ENCODE measurements at regions of chr21 and their contacts with region 1.

Region 1: GRCh38 chr21:37463083-37463801 is 96.7 kb downstream of the DYRK1A start:
- DNase-seq: no peak
- ATAC-seq: peak; percentile 58
- H3K4me3 Mint-ChIP-seq: no peak overlapping the region
- H3K27ac Mint-ChIP-seq: peak overlapping the region; percentile 31
- H3K4me1 Mint-ChIP-seq: peaks cover 47% of the 10 kb centered on the region
- H3K27me3 Mint-ChIP-seq: no peaks in the 10 kb centered on the region

Region 2: GRCh38 chr21:37446552-37446951 is 16.7 kb before region 1 on chr21:
- CTCF ChIA-PET with region 1: interaction called, 10 read pairs
- POLR2A ChIA-PET with region 1: no interaction called
- DNase-seq: no peak
- ATAC-seq: peak; percentile 32
- H3K4me3 Mint-ChIP-seq: no peak overlapping the region
- H3K27ac Mint-ChIP-seq: no peak overlapping the region
- H3K4me1 Mint-ChIP-seq: peaks cover 42% of the 10 kb centered on the region
- H3K27me3 Mint-ChIP-seq: no peaks in the 10 kb centered on the region

Region 3: DNA sequence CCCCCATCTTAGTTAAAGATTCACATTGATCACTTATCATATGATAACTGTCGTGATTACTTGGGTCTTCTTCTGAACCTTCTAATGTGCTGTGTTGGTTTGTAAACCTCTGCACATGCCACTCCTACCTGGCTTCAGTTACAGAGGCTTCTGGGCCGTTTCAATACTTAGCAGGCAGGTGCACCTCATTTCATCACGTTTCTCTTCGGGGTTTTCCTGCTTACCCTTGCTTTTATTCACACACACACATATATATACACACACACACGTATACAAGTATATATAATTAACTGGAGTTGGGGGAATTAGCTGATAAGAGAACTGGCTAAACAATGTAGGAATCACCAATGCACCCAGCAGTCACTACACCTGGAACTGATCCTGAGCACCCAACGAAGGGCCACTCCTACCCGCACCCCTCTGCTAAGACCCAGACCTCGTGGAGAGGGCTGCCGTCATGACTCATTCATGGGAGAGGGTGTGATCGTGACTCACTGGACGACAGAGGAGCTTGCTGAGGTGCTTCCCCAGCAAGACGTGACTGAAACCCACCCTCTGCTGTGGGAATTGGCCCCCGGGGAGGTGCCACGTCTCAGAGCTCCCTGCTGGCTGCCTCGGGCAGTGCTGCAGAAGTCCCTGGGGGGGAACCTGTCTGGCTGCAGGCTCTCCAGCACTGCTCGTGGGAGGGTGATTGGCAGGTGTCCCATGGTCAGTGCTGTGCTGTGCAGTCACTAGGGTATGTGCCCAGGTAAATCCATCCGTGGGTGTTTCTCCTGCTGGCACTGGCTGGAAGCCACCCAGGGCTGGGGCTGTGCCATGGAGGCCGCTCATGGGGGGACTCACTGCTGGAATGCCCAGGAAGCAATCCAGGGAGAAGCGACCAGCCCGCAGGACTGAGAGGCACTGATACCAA is 69.9 kb after region 1 on chr21:
- CTCF ChIA-PET with region 1: no interaction called
- POLR2A ChIA-PET with region 1: no interaction called
- DNase-seq: no peak
- ATAC-seq: no peak
- H3K4me3 Mint-ChIP-seq: no peak overlapping the region
- H3K27ac Mint-ChIP-seq: no peak overlapping the region
- H3K4me1 Mint-ChIP-seq: peaks cover 5% of the 10 kb centered on the region
- H3K27me3 Mint-ChIP-seq: peaks cover 25% of the 10 kb centered on the region

Region 4: GRCh38 chr21:37563641-37564340 is 100.5 kb after region 1 on chr21:
- CTCF ChIA-PET with region 1: interaction called, 15 read pairs
- POLR2A ChIA-PET with region 1: no interaction called
- DNase-seq: peak; percentile 94
- ATAC-seq: peak; percentile 90
- H3K4me3 Mint-ChIP-seq: peak overlapping the region; percentile 84
- H3K27ac Mint-ChIP-seq: peak overlapping the region; percentile 98
- H3K4me1 Mint-ChIP-seq: peaks cover 34% of the 10 kb centered on the region
- H3K27me3 Mint-ChIP-seq: no peaks in the 10 kb centered on the region

Region 5: DNA sequence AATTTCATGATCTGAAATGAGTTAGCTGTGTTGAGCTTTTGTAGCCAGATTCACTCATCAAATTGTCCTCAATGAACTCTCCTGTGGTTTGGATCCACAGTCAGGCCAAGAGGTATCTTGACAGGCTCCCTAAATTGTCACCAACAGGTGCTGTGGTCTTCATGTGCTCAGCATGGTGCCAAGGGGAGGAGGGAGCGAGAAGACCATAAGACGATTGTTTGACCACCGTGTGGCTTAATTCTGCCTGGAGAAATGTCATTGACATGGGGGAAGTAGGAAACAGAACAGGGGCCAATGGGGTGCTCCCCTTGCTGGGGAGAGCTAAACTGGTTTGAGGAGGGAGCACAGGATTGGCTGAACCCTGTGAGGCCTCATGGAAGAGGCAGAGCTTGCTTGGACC is 233.7 kb after region 1 on chr21:
- CTCF ChIA-PET with region 1: no interaction called
- POLR2A ChIA-PET with region 1: no interaction called
- DNase-seq: no peak
- ATAC-seq: no peak
- H3K4me3 Mint-ChIP-seq: no peak overlapping the region
- H3K27ac Mint-ChIP-seq: no peak overlapping the region
- H3K4me1 Mint-ChIP-seq: no peaks in the 10 kb centered on the region
- H3K27me3 Mint-ChIP-seq: no peaks in the 10 kb centered on the region

Region 6: GRCh38 chr21:37737507-37737906 is 274.3 kb after region 1 on chr21:
- CTCF ChIA-PET with region 1: no interaction called
- POLR2A ChIA-PET with region 1: no interaction called
- DNase-seq: no peak
- ATAC-seq: no peak
- H3K4me3 Mint-ChIP-seq: no peak overlapping the region
- H3K27ac Mint-ChIP-seq: no peak overlapping the region
- H3K4me1 Mint-ChIP-seq: no peaks in the 10 kb centered on the region
- H3K27me3 Mint-ChIP-seq: peaks cover 7% of the 10 kb centered on the region

Measured in activated CD8-positive, alpha-beta T cell treated with anti-CD3 and anti-CD28 coated beads, Interleukin-2, amount 10 ng/mL, durations not matched to agents 7 days and 5 days (primary cell).